IMR-90 (cell line): ENCODE measurements at regions of chr6 and their contacts with region 1.

Region 1: DNA sequence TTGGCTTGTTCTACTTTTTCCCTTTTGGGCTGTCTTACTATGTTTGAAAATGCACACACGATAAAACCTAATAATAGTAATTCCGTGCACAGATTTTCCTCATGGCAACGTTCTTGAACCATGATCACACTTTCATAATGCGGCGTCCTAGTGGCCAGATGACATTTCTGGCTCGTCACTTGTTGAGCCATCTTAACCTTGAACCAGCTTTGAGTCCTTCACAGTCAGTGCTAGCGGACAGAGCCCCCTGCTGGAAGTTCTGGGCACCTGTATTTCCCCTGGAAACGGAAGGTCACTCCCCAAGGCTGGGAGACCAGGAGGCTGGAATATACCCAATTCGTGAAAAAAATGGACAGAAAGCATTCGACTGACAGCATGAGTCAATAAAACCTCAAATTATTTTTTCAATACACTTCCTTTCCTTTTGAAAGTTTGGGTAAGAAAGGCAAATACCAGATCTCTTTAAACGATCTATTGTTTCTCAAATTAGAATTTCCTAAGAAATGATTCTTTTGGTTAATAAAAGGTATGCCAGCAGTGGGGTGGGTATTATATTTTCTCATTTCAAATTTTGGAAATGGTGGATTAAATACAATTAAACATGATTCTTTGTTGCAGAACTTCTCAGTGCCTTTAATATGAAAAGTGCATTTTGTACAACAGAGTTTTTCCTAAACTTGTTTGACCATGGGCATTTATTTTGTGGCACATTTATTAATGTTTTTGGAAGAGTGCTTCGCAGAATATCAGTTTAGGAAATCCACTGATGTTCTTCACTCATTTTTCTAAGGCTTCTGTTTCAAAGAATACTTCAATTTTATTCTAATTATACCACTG is 542.3 kb downstream of the QKI start:
- DNase-seq: peak; percentile 78
- ATAC-seq: peak; percentile 73
- H3K4me3 ChIP-seq: no peak overlapping the region
- H3K27ac ChIP-seq: no peak overlapping the region
- H3K4me1 ChIP-seq: peaks cover 5% of the 10 kb centered on the region; the same call in 1 of the 2 replicates
- H3K27me3 ChIP-seq: no peaks in the 10 kb centered on the region
- CTCF ChIP-seq: peak; percentile 90
- POLR2A ChIP-seq: no peak
- RAD21 ChIP-seq: peak; percentile 94

Region 2: DNA sequence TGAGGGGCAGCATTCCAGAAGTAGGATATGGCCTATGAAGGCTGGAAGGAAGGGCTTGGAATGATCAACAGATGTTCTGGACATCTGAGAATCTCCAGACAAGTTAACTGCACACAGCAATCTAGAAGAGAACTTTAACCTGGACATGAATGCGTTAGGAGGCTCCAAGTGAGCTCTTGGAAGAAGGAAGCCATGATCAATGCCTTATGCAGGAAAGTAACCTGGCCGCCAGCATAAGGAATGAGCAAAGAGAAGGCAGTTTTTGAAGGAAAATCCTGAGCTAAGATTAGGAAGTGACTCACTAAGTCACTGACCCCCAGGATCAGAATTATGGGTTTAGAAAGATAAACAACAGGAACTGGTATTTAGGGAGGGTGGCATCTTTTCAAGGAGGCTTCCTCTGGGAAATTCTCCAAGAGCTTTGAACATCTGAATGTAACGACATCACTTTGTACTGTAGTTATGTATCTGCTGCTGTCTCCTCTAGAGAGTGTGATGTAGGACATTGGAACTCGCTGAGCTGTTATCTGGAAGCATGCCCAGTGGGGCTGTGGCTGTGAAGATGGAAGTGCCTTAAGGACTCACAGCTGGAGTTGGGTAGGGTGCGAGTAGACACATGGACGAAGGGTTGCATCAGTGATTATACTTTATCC is 992.2 kb before region 1 on chr6:
- CTCF ChIA-PET with region 1: no interaction called
- POLR2A ChIA-PET with region 1: no interaction called
- dilution Hi-C with region 1: no loop called
- in situ Hi-C with region 1: no loop called
- intact Hi-C with region 1: loop called (anchors 10 kb)
- DNase-seq: peak; percentile 99
- ATAC-seq: peak; percentile 93
- H3K4me3 ChIP-seq: no peak overlapping the region
- H3K27ac ChIP-seq: peak overlapping the region; percentile 82
- H3K4me1 ChIP-seq: peaks cover 4% of the 10 kb centered on the region
- H3K27me3 ChIP-seq: no peaks in the 10 kb centered on the region
- CTCF ChIP-seq: no peak
- POLR2A ChIP-seq: no peak
- RAD21 ChIP-seq: no peak

Region 3: DNA sequence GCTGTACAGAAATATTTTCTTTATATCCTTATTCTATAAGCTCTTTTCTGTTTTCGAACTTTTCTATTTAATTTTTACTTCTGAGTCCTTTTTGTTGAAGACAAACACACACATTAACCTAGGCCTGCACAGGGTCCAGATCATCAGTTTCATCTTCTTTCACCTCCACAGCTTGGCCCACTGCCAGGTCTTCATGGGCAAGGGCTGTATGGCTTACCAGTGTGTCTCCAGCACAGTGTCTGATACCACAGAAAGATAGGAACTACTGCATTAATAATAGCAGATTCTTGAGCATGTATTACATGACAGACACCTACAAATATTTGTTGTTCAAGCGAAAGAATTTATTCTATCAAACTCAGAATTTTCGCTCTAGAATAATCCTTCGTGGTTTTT is 517.9 kb before region 1 on chr6:
- CTCF ChIA-PET with region 1: no interaction called
- POLR2A ChIA-PET with region 1: no interaction called
- dilution Hi-C with region 1: no loop called
- in situ Hi-C with region 1: loop called (anchors 10 kb)
- intact Hi-C with region 1: no loop called
- DNase-seq: no peak
- ATAC-seq: no peak
- H3K4me3 ChIP-seq: no peak overlapping the region
- H3K27ac ChIP-seq: no peak overlapping the region
- H3K4me1 ChIP-seq: peaks cover 2% of the 10 kb centered on the region; the same call in 1 of the 2 replicates
- H3K27me3 ChIP-seq: no peaks in the 10 kb centered on the region
- CTCF ChIP-seq: no peak
- POLR2A ChIP-seq: no peak
- RAD21 ChIP-seq: no peak

Region 4: GRCh38 chr6:163585932-163586437 is 370.8 kb before region 1 on chr6:
- CTCF ChIA-PET with region 1: interaction called, 3 read pairs
- POLR2A ChIA-PET with region 1: no interaction called
- dilution Hi-C with region 1: no loop called
- in situ Hi-C with region 1: loop called (anchors 25 kb)
- intact Hi-C with region 1: loop called (anchors 5 kb)
- DNase-seq: peak; percentile 93
- ATAC-seq: peak; percentile 89
- H3K4me3 ChIP-seq: no peak overlapping the region
- H3K27ac ChIP-seq: peak overlapping the region; percentile 23; the same call in 1 of the 2 replicates
- H3K4me1 ChIP-seq: peaks cover 7% of the 10 kb centered on the region
- H3K27me3 ChIP-seq: no peaks in the 10 kb centered on the region
- CTCF ChIP-seq: no peak
- POLR2A ChIP-seq: no peak
- RAD21 ChIP-seq: no peak

Region 5: GRCh38 chr6:163842467-163842866 is 114.3 kb before region 1 on chr6:
- CTCF ChIA-PET with region 1: no interaction called
- POLR2A ChIA-PET with region 1: no interaction called
- dilution Hi-C with region 1: no loop called
- in situ Hi-C with region 1: no loop called
- intact Hi-C with region 1: no loop called
- DNase-seq: no peak
- ATAC-seq: no peak
- H3K4me3 ChIP-seq: no peak overlapping the region
- H3K27ac ChIP-seq: no peak overlapping the region
- H3K4me1 ChIP-seq: peaks cover 4% of the 10 kb centered on the region; the same call in 1 of the 2 replicates
- H3K27me3 ChIP-seq: no peaks in the 10 kb centered on the region
- CTCF ChIP-seq: no peak
- POLR2A ChIP-seq: no peak
- RAD21 ChIP-seq: no peak

Region 6: DNA sequence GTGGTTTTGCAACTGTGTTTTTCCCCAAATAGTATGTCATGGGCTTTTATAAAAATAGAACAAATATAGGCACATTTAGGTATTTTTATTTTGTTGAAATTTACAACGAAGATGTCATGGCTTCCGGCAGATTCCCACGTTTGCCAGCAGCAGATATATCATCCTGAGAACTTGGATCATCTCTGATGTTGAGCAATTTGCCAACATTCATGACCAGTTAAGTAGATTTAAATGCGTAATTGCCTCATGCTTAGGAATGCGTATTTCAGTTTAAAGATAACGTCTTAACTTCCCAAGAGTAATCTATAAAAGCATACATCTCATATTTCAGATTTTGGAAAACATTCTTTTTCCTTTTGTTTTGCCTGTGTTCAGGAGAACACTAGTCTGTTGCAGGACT is 84.5 kb before region 1 on chr6:
- CTCF ChIA-PET with region 1: no interaction called
- POLR2A ChIA-PET with region 1: no interaction called
- dilution Hi-C with region 1: no loop called
- in situ Hi-C with region 1: no loop called
- intact Hi-C with region 1: loop called (anchors 2 kb)
- DNase-seq: peak; percentile 98
- ATAC-seq: peak; percentile 80
- H3K4me3 ChIP-seq: no peak overlapping the region
- H3K27ac ChIP-seq: no peak overlapping the region
- H3K4me1 ChIP-seq: peaks cover 5% of the 10 kb centered on the region
- H3K27me3 ChIP-seq: no peaks in the 10 kb centered on the region
- CTCF ChIP-seq: no peak
- POLR2A ChIP-seq: no peak
- RAD21 ChIP-seq: no peak